PC-9 (cell line): ENCODE measurements at regions of chr2 and their contacts with region 1.

Region 1: DNA sequence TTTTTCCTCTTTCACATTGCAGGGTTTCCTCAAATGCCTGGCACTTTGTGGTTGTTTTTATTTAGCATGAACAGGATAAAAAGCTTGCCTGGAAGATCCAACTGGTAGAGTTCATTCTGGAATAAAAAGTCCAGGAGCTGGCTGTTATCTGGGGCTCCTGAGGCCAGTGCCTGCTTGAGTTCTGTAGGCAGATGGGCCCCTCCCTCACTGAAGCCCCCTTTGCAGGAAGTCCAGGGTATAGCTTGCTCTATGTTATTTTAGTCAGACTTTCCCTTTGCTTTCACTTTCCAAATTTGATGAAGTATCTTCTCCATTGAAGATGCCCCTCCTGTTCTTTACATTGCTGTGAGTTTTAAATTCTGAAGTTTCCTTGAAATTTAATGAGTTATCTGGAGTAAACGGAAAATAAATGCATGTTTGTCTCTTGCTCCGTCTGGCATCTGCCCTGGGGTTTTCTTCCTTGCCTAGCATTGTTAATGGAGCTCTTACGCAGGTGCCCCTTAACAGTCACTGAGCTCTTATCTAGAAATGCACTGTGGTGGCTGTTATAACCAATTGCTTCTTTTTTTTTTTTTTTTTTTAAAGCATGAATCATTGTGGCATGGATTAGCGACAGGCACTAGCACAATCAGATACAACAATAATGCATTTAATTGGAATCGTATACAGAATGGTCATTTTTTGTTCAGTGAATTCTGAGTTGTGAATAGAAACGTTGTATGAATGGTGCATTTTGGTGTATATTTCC is 27.0 kb upstream of the LPIN1 start:
- DNase-seq: no peak
- H3K4me3 ChIP-seq: no peak overlapping the region
- H3K27ac ChIP-seq: no peak overlapping the region
- H3K4me1 ChIP-seq: peaks cover 8% of the 10 kb centered on the region
- H3K27me3 ChIP-seq: no peaks in the 10 kb centered on the region
- CTCF ChIP-seq: no peak

Region 2: GRCh38 chr2:11515490-11515981 is 203.9 kb before region 1 on chr2:
- CTCF ChIA-PET with region 1: no interaction called
- POLR2A ChIA-PET with region 1: no interaction called
- intact Hi-C with region 1: no loop called
- DNase-seq: no peak
- H3K4me3 ChIP-seq: no peak overlapping the region
- H3K27ac ChIP-seq: no peak overlapping the region
- H3K4me1 ChIP-seq: no peaks in the 10 kb centered on the region
- H3K27me3 ChIP-seq: peaks cover 74% of the 10 kb centered on the region
- CTCF ChIP-seq: no peak

Region 3: GRCh38 chr2:11753886-11754699 is 34.7 kb after region 1 on chr2:
- CTCF ChIA-PET with region 1: no interaction called
- POLR2A ChIA-PET with region 1: interaction called, 10 read pairs
- intact Hi-C with region 1: no loop called
- DNase-seq: peak; percentile 65 to 95
- H3K4me3 ChIP-seq: peak overlapping the region; percentile 34; the same call in 1 of the 2 replicates
- H3K27ac ChIP-seq: peak overlapping the region; percentile 91
- H3K4me1 ChIP-seq: peaks cover 61% of the 10 kb centered on the region
- H3K27me3 ChIP-seq: no peaks in the 10 kb centered on the region
- CTCF ChIP-seq: no peak